Caco-2 (cell line): ENCODE measurements at regions of chr2 and their contacts with region 1.

Region 1: GRCh38 chr2:203327901-203328759 is at the start of gene ABI2:
- DNase-seq: peak; percentile 90 to 96
- H3K4me3 ChIP-seq: peak within 1 kb of the TSS; percentile 91
- H3K4me3 Mint-ChIP-seq: peak within 1 kb of the TSS; percentile 76
- H3K27ac Mint-ChIP-seq: peak within 1 kb of the TSS; percentile 84
- H3K4me1 ChIP-seq: peaks cover 6% of the 10 kb centered on the region; the same call in 1 of the 2 replicates
- H3K4me1 Mint-ChIP-seq: peaks cover 14% of the 10 kb centered on the region
- H3K27me3 ChIP-seq: no peaks in the 10 kb centered on the region
- H3K27me3 Mint-ChIP-seq: no peaks in the 10 kb centered on the region
- CTCF ChIP-seq: no peak
- total RNA-seq, gene ABI2: 58.6 and 60.0 TPM in 2 replicates

Region 2: DNA sequence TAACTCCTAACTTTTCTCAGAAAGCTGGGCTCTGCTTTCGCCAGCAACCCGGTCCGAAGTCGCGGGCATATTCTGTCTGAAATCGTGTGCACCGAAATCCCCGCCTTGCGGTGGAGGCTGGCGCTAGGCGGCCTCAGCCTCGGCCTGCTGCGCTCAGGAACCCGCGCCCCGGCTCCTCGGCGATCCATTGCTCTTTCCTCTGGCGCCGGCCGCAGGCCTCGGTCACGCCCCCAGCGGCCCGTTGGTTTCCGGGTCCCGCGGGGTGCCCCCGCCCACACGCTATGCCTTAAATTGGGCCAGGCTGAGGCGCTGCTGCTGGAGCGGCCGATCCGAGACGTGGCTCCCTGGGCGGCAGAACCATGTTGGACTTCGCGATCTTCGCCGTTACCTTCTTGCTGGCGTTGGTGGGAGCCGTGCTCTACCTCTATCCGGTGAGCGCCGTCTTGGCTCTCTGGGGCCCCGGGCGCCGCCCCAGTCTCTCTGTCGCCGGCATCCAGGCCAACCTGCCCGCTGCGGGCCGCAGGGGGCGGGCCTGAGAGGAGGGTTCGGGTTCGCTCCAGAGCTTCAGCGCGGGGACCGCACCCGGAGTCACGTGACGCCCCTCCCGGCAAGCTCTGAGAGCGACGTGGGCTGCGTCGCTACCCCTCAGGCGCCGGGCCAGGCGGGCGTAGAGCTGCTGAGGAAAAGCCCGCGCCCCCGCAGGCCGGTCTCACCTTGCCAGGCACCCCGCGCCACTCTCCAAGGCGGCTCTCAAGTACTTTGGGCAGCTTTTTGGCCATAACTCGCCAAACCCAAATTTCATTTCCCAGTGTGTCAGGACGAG is 89.2 kb before region 1 on chr2 and contains the start of gene CYP20A1:
- CTCF ChIA-PET with region 1: no interaction called
- POLR2A ChIA-PET with region 1: no interaction called
- intact Hi-C with region 1: loop called (anchors 2 kb)
- DNase-seq: peak; percentile 96 to 99
- H3K4me3 ChIP-seq: peak within 1 kb of the TSS; percentile 65
- H3K4me3 Mint-ChIP-seq: peak within 1 kb of the TSS; percentile 97
- H3K27ac Mint-ChIP-seq: peak within 1 kb of the TSS; percentile 97
- H3K4me1 ChIP-seq: peaks cover 11% of the 10 kb centered on the region; the same call in 1 of the 2 replicates
- H3K4me1 Mint-ChIP-seq: peaks cover 15% of the 10 kb centered on the region
- H3K27me3 ChIP-seq: no peaks in the 10 kb centered on the region
- H3K27me3 Mint-ChIP-seq: no peaks in the 10 kb centered on the region
- CTCF ChIP-seq: peak in 1 of 2 experiments; percentile 57
- total RNA-seq, gene CYP20A1: 32.1 and 39.3 TPM in 2 replicates

Region 3: DNA sequence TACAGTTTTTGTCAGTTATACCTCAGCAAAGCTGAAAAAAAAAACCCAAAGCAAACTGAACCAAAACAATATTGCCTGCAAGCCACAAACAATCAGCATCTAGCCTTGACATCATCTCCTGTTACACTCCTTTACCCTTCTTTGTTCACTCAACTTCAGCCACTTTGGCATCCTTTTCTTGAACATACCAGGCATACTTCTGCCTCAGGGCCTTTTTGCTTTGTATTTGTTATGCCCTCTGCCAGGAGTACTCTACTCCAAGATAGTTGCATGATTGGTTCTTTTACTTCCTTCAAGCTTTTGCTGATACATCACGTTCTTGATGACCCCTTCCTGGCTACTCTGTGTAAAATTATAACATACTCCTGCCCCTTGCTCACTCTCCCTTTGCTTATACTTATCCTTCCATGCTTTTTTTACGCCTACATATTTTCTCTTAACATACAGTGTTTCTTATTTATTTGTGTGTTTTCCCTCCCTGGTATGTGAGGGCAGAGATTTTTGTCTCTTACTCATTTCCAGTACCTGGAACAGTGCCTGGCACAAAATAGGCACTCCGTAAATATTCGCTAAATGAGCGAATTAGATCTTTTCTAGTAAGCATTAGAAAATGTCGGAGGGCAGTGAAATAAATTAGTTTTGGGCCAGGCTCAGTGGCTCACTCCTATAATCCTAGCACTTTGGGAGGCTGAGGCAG is 12.8 kb after region 1 on chr2:
- CTCF ChIA-PET with region 1: no interaction called
- POLR2A ChIA-PET with region 1: no interaction called
- intact Hi-C with region 1: no loop called
- DNase-seq: no peak
- H3K4me3 ChIP-seq: no peak overlapping the region
- H3K4me3 Mint-ChIP-seq: no peak overlapping the region
- H3K27ac Mint-ChIP-seq: no peak overlapping the region
- H3K4me1 ChIP-seq: no peaks in the 10 kb centered on the region
- H3K4me1 Mint-ChIP-seq: no peaks in the 10 kb centered on the region
- H3K27me3 ChIP-seq: no peaks in the 10 kb centered on the region
- H3K27me3 Mint-ChIP-seq: no peaks in the 10 kb centered on the region
- CTCF ChIP-seq: no peak

Region 4: DNA sequence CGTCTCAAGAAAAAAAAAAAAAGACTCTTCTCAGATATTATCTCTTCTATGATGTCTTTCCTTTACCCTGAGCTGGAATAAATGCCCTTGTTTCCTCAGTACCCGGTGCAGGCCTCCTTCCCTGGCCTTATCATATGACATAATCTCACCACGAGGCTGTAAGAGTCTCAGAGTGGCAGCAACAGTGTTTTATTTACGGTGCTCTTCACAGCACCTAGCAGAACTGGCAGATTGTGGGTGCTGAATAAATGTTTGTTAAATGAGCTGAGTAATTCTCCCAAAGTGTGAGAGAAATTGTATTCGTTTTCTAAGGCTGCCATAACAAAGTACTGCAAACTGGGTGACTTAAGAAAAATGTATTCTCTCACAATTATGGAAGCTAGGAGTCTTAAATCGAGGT is 295.5 kb after region 1 on chr2:
- CTCF ChIA-PET with region 1: no interaction called
- POLR2A ChIA-PET with region 1: no interaction called
- intact Hi-C with region 1: no loop called
- DNase-seq: no peak
- H3K4me3 ChIP-seq: no peak overlapping the region
- H3K4me3 Mint-ChIP-seq: no peak overlapping the region
- H3K27ac Mint-ChIP-seq: no peak overlapping the region
- H3K4me1 ChIP-seq: peaks cover 21% of the 10 kb centered on the region
- H3K4me1 Mint-ChIP-seq: peaks cover 23% of the 10 kb centered on the region
- H3K27me3 ChIP-seq: no peaks in the 10 kb centered on the region
- H3K27me3 Mint-ChIP-seq: no peaks in the 10 kb centered on the region
- CTCF ChIP-seq: no peak